ENCODE measurements at regions of chr10 and their contacts with region 1.

Region 1: DNA sequence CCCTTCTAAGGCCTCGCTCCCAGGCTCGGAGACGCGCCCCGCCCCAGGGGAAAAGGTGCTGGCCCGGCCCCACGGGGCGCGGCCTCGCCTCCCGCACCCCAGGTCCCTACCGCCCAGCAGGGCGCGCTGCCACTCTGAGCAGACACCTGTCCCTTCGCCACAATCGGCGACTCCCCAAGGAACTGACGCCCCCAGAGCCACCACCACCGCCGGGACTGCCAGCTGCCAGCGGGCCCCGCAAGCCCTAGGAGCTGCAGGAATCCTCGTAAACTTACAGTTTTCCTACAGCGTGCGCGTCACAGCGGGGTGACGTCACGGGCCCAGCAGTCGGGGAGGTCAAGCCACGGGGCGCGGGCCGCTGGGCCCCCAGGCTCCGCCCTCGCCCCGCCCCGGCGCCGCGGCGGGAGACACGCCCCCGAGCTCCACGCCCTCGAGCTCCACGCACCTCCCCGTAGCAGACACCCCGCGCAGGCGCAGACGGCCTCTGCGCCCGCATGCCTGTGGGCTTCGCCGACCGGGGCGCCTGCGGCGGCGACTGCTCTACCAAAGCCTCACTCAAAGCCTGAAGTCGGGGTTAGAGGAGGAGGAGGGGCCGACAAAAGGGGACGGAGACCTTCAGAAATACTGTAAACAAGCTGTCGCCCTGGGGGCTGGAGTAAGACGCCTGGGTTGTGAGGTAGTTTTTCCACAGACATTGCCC is at the start of gene ZNF438:
- DNase-seq: peak; percentile 99
- total RNA-seq, gene ZNF438: 12.5 TPM

Region 2: DNA sequence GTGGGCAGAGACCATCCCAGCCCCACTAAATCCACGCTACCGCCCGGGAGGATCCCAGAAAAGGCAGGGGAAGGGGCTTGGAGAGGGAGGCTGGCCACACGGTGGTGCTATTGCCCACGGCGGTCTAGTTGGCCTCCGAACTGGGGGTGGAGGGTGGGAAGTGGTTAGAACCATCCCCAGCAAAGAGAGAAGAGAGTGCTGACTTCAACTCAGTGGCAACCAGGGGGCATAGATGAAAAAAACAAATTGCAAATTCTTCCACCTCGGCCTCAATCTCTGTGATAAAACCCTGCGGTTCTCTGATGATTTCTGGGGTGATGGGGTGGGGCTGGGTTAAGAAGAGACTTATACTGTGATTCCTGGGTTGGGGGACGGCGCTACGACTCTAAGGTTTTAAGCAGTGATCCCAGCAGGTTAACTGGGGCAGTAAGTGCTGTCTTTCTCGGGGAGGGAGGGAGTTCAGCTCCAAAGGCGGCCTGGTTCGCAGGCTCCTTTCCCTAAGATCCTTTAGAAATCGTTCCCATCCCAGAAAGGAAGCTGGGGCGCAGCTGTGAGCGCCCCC is 247.7 kb before region 1 on chr10:
- intact Hi-C with region 1: loop called (anchors 1 kb)
- DNase-seq: peak; percentile 95

Region 3: GRCh38 chr10:30857803-30858202 is 173.9 kb before region 1 on chr10:
- intact Hi-C with region 1: loop called (anchors 5 kb)
- DNase-seq: peak; percentile 80

Region 4: DNA sequence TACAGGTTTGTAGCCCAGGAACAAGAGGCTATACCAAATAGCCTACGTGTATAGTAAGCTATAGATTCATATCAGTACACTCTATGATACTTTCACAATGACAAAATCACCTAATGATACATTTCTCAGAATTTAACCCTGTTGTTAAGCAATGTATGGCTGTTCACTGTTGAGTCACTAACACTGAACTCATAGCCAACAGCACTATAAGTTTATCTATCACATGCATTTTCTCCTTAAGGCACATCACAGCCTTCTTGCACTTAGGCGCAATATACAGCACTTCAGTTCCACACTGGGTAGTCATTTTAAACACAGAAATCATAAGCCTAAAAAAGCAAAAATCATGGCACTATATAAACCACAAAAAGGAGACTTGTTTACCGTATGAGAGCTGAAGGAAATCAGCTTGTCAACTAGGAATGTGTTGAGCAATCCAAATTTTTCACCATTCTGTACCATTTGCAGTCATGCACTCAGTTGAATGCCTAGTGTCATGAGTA is 45.6 kb before region 1 on chr10:
- intact Hi-C with region 1: loop called (anchors 5 kb)
- DNase-seq: no peak

Region 5: DNA sequence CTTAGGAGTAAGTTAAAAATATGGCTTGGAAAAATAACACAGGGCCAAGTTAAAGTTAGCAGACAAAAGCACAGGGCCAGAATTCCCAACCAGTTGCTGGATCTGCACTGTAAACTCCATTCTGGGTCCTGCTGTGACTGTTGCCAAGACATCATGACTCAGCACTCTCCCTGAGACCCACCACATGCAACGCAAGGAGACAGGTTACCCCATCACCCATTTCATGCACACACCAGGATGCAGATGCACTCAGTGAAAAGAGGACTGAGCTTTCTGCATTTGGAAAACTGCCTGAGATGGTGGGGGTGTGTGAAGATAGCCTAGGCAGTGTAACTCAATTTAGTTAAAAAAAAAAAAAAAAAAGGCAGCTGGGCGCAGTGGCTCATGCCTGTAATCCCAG is 97.6 kb after region 1 on chr10:
- intact Hi-C with region 1: no loop called
- DNase-seq: no peak

Region 6: GRCh38 chr10:31707093-31708039 is 675.7 kb after region 1 on chr10:
- intact Hi-C with region 1: loop called (anchors 10 kb)
- DNase-seq: peak; percentile 88